Natural killer cell (primary cell): ENCODE measurements at regions of chr20 and their contacts with region 1.

Region 1: GRCh38 chr20:36932476-36933426 is 18.8 kb downstream of the SAMHD1 start:
- DNase-seq: no peak
- ATAC-seq: no peak
- H3K4me3 ChIP-seq: no peak overlapping the region
- H3K4me3 Mint-ChIP-seq: no peak overlapping the region
- H3K27ac ChIP-seq: no peak overlapping the region
- H3K27ac Mint-ChIP-seq: peak overlapping the region; percentile 47 to 90
- H3K4me1 ChIP-seq: peaks cover 53% of the 10 kb centered on the region
- H3K4me1 Mint-ChIP-seq: peaks cover 48 to 51% of the 10 kb centered on the region in 2 donors
- H3K27me3 ChIP-seq: no peaks in the 10 kb centered on the region
- H3K27me3 Mint-ChIP-seq: no peaks in the 10 kb centered on the region
- CTCF ChIP-seq: no peak

Region 2: DNA sequence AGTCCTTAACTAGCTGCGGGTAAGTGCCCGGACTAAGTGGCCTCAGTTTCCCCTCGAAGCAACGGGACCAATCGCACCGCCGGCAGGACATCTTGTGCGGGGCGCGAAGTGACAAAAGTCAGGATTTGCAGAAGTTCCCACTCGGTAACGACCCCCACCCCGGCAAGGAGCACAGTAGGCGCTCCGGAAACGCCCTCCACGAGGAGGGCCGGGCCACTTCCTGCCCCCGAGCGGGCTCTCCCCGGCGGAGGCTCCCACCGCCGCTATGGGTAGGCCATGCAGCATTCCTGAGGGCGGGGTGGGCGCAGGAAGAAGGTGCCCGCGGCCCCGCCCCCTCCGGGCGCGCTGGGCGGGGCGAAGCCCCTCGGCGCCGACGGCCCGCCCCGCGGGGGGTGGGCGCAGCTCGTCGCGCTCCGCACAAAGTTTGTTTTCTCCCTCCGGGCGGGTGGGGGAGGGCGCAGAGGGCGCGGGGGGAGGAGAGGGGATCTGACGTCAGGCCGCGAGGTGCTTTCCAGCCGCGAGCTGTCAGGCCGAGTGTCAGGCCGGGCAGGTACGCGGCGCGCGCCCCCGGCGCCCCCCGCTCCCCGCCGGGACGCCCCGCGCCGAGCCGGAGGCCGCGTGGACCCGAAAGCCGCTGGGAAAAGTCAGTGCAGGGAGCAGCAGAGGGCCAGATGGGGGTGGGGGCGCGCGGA is 359.5 kb before region 1 on chr20 and contains the start of gene TGIF2:
- intact Hi-C with region 1: loop called (anchors 10 kb)
- DNase-seq: peak; percentile 78 to 96
- ATAC-seq: peak; percentile 67 to 89 (median 81)
- H3K4me3 ChIP-seq: peak within 1 kb of the TSS; percentile 100
- H3K4me3 Mint-ChIP-seq: peak within 1 kb of the TSS; percentile 92
- H3K27ac ChIP-seq: peak within 1 kb of the TSS; percentile 98
- H3K27ac Mint-ChIP-seq: peak within 1 kb of the TSS; percentile 90 to 93
- H3K4me1 ChIP-seq: peaks cover 23% of the 10 kb centered on the region
- H3K4me1 Mint-ChIP-seq: peaks cover 28 to 31% of the 10 kb centered on the region in 2 donors
- H3K27me3 ChIP-seq: no peaks in the 10 kb centered on the region
- H3K27me3 Mint-ChIP-seq: no peaks in the 10 kb centered on the region
- CTCF ChIP-seq: no peak
- total RNA-seq, gene TGIF2: 19.9 to 28.5 (median 25.9) TPM